Left ventricle myocardium inferior (tissue), 1 donor: ENCODE measurements at regions of chr18 and their contacts with region 1.

Region 1: GRCh38 chr18:63439334-63439733 is 17.1 kb upstream of the VPS4B start:
- DNase-seq: no peak
- H3K4me3 ChIP-seq: no peak overlapping the region
- H3K27ac ChIP-seq: no peak overlapping the region
- H3K4me1 ChIP-seq: peaks cover 7% of the 10 kb centered on the region
- H3K27me3 ChIP-seq: no peaks in the 10 kb centered on the region
- CTCF ChIP-seq: peak; percentile 84

Region 2: DNA sequence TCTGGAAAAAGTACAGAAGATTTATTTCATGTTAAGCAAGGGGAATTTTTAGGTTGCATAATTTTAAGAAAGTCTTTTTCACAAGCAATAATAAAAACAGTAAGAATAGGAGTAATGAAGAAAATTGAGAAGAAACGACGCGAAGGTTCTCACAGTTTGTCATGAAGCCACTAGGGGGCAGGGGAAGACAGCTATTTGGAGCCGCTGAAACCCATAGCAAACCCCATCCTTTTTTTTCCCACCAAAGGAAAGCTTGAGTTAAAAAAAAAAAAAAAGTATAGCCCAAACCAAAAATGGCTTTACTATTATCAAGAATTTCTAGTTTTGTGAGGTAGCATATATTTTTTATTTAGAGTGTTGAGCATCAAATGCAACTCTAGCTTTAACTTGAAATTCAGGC is 423.1 kb before region 1 on chr18:
- intact Hi-C with region 1: loop called (anchors 10 kb)
- DNase-seq: no peak
- H3K4me3 ChIP-seq: no peak overlapping the region
- H3K27ac ChIP-seq: no peak overlapping the region
- H3K4me1 ChIP-seq: peaks cover 3% of the 10 kb centered on the region
- H3K27me3 ChIP-seq: peaks cover 23% of the 10 kb centered on the region
- CTCF ChIP-seq: peak; percentile 83

Region 3: GRCh38 chr18:63367053-63367953 is 72.0 kb before region 1 on chr18 and contains the start of gene KDSR:
- intact Hi-C with region 1: loop called (anchors 10 kb)
- DNase-seq: peak; percentile 96
- H3K4me3 ChIP-seq: peak within 1 kb of the TSS; percentile 97
- H3K27ac ChIP-seq: peak within 1 kb of the TSS; percentile 98
- H3K4me1 ChIP-seq: peaks cover 45% of the 10 kb centered on the region
- H3K27me3 ChIP-seq: no peaks in the 10 kb centered on the region
- CTCF ChIP-seq: no peak
- total RNA-seq, gene KDSR: 31.3 TPM

Region 4: GRCh38 chr18:63378919-63379638 is 60.3 kb before region 1 on chr18:
- intact Hi-C with region 1: no loop called
- DNase-seq: no peak
- H3K4me3 ChIP-seq: no peak overlapping the region
- H3K27ac ChIP-seq: no peak overlapping the region
- H3K4me1 ChIP-seq: no peaks in the 10 kb centered on the region
- H3K27me3 ChIP-seq: no peaks in the 10 kb centered on the region
- CTCF ChIP-seq: no peak